PC-3 (cell line): ENCODE measurements at regions of chr7 and their contacts with region 1.

Region 1: GRCh38 chr7:6272481-6273323 is at the start of gene CYTH3:
- DNase-seq: peak; percentile 92
- ATAC-seq: peak; percentile 79
- H3K4me3 ChIP-seq: peak within 1 kb of the TSS; percentile 93
- H3K27ac ChIP-seq: no peak within 1 kb of the TSS
- H3K4me1 ChIP-seq: peaks cover 27% of the 10 kb centered on the region
- H3K27me3 ChIP-seq: no peaks in the 10 kb centered on the region
- CTCF ChIP-seq: no peak
- total RNA-seq, gene CYTH3: 23.1 and 34.4 TPM in 2 replicates

Region 2: GRCh38 chr7:6160191-6160623 is 112.5 kb before region 1 on chr7:
- CTCF ChIA-PET with region 1: interaction called, 5 read pairs
- POLR2A ChIA-PET with region 1: no interaction called
- intact Hi-C with region 1: loop called (anchors 2 kb)
- DNase-seq: peak; percentile 42
- ATAC-seq: peak; percentile 78
- H3K4me3 ChIP-seq: no peak overlapping the region
- H3K27ac ChIP-seq: no peak overlapping the region
- H3K4me1 ChIP-seq: no peaks in the 10 kb centered on the region
- H3K27me3 ChIP-seq: no peaks in the 10 kb centered on the region
- CTCF ChIP-seq: peak; percentile 69

Region 3: DNA sequence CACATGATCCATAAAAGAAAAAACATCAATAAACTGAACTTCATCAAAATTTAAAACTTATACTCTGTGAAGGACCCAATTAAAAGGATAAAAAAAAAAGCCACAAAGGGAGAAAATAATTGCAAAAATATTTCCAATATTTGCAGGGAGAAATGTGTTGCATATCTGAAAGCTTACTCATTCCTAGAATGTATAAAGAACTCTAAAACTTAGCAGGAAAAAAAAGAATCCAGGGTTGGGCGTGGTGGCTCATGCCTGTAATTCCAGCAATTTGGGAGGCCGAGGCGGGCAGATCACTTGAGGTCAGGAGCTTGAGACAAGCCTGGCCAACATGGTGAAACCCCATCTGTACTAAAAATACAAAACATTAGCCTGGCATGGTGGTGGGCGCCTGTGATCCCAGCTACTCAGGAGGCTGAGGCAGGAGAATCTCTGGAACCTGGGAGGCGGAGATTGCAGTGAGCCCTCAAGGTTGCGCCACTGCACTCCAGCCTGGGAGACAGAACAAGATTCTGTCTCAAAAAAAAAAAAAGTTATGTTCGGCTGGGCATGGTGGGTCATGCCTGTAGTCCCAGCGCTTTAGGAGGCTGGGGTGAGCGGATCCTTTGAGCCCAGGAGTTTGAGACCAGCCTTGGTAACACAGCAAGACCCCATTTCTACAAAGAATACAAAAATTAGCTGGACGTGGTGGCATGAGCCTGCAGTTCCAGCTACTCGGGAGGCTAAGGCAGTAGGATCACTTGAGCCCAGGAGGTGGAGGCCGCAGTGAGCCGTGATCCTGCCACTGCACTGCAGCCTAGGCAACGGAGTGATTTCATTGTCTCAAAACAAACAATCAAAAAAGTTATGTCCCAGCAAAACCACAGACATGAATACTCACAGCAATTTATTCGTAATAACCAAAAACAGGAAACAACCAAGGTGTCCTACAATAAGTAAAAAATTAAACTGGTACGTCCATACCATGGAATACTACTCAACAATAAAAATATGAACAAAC is 11.0 kb after region 1 on chr7:
- CTCF ChIA-PET with region 1: no interaction called
- POLR2A ChIA-PET with region 1: no interaction called
- intact Hi-C with region 1: loop called (anchors 1 kb)
- DNase-seq: peak; percentile 87
- ATAC-seq: peak; percentile 69
- H3K4me3 ChIP-seq: peak overlapping the region; percentile 44; the same call in 1 of the 2 replicates
- H3K27ac ChIP-seq: peak overlapping the region; percentile 100
- H3K4me1 ChIP-seq: peaks cover 35% of the 10 kb centered on the region
- H3K27me3 ChIP-seq: no peaks in the 10 kb centered on the region
- CTCF ChIP-seq: no peak

Region 4: GRCh38 chr7:6306471-6306870 is 33.8 kb after region 1 on chr7:
- CTCF ChIA-PET with region 1: interaction called, 9 read pairs
- POLR2A ChIA-PET with region 1: no interaction called
- intact Hi-C with region 1: loop called (anchors 5 kb)
- DNase-seq: peak; percentile 87
- ATAC-seq: peak; percentile 99
- H3K4me3 ChIP-seq: no peak overlapping the region
- H3K27ac ChIP-seq: no peak overlapping the region
- H3K4me1 ChIP-seq: peaks cover 20% of the 10 kb centered on the region
- H3K27me3 ChIP-seq: no peaks in the 10 kb centered on the region
- CTCF ChIP-seq: no peak

Region 5: GRCh38 chr7:6435486-6436384 is 163.0 kb after region 1 on chr7:
- CTCF ChIA-PET with region 1: no interaction called
- POLR2A ChIA-PET with region 1: no interaction called
- intact Hi-C with region 1: loop called (anchors 5 kb)
- DNase-seq: peak; percentile 86
- ATAC-seq: peak; percentile 89
- H3K4me3 ChIP-seq: no peak overlapping the region
- H3K27ac ChIP-seq: no peak overlapping the region
- H3K4me1 ChIP-seq: peaks cover 12% of the 10 kb centered on the region; the same call in 1 of the 2 replicates
- H3K27me3 ChIP-seq: no peaks in the 10 kb centered on the region
- CTCF ChIP-seq: peak; percentile 96